Activated CD4-positive, alpha-beta T cell treated with anti-CD3 and anti-CD28 coated beads for 36 hours (primary cell): ENCODE measurements at regions of chr22 and their contacts with region 1.

Region 1: DNA sequence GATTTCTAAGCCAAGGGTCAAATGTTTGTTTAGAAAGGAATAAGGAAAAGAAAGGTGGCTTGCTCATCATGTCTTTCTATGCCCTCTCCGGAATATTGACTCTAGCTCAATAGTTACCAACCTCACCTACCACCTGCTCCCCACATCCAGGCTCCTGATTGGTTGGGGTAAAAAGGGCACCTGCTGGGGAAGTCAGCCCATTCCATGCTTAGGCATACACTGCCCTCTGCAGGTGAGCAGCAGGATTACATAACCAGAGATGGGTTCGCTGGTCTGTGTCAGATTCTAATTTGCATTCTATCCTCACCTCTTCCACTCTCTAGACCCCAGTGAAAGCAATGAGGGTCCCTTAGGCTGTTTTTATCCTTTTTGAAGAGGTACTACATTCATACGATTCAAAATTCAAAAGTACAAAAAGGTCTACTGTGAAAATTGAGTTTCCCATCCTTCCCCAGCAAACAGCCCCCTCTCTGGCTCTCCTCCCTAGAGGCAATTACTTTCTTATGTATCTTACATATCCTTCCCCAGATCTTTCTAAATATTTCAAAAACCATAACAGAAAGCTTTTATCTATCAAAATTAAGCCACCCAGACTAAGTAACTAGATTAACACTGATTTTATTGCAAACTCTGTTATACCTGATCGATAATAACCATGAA is 98.0 kb upstream of the ASPHD2 start:
- DNase-seq: peak; percentile 76
- ATAC-seq: peak; percentile 55
- H3K4me3 Mint-ChIP-seq: no peak overlapping the region
- H3K27ac Mint-ChIP-seq: no peak overlapping the region
- H3K4me1 Mint-ChIP-seq: no peaks in the 10 kb centered on the region
- H3K27me3 Mint-ChIP-seq: peaks cover 9% of the 10 kb centered on the region

Region 2: GRCh38 chr22:25465949-25466348 is 865.1 kb before region 1 on chr22:
- CTCF ChIA-PET with region 1: interaction called, 6 read pairs
- POLR2A ChIA-PET with region 1: no interaction called
- intact Hi-C with region 1: loop called in 1 of 2 experiments (anchors 2 kb)
- DNase-seq: no peak
- ATAC-seq: no peak
- H3K4me3 Mint-ChIP-seq: no peak overlapping the region
- H3K27ac Mint-ChIP-seq: no peak overlapping the region
- H3K4me1 Mint-ChIP-seq: no peaks in the 10 kb centered on the region
- H3K27me3 Mint-ChIP-seq: no peaks in the 10 kb centered on the region

Region 3: GRCh38 chr22:25777870-25778269 is 553.2 kb before region 1 on chr22:
- CTCF ChIA-PET with region 1: no interaction called
- POLR2A ChIA-PET with region 1: no interaction called
- intact Hi-C with region 1: loop called (anchors 1 to 2 kb)
- DNase-seq: peak; percentile 16
- ATAC-seq: no peak
- H3K4me3 Mint-ChIP-seq: no peak overlapping the region
- H3K27ac Mint-ChIP-seq: no peak overlapping the region
- H3K4me1 Mint-ChIP-seq: peaks cover under 1% of the 10 kb centered on the region
- H3K27me3 Mint-ChIP-seq: peaks cover 2% of the 10 kb centered on the region

Region 4: GRCh38 chr22:25896098-25896497 is 435.0 kb before region 1 on chr22:
- CTCF ChIA-PET with region 1: interaction called, 4 read pairs
- POLR2A ChIA-PET with region 1: no interaction called
- intact Hi-C with region 1: loop called in 1 of 2 experiments (anchors 2 kb)
- DNase-seq: no peak
- ATAC-seq: no peak
- H3K4me3 Mint-ChIP-seq: no peak overlapping the region
- H3K27ac Mint-ChIP-seq: no peak overlapping the region
- H3K4me1 Mint-ChIP-seq: no peaks in the 10 kb centered on the region
- H3K27me3 Mint-ChIP-seq: peaks cover 3% of the 10 kb centered on the region

Region 5: GRCh38 chr22:26172389-26172990 is 158.6 kb before region 1 on chr22:
- CTCF ChIA-PET with region 1: interaction called, 8 read pairs
- POLR2A ChIA-PET with region 1: no interaction called
- intact Hi-C with region 1: loop called (anchors 2 to 5 kb)
- DNase-seq: peak; percentile 60
- ATAC-seq: no peak
- H3K4me3 Mint-ChIP-seq: no peak overlapping the region
- H3K27ac Mint-ChIP-seq: no peak overlapping the region
- H3K4me1 Mint-ChIP-seq: no peaks in the 10 kb centered on the region
- H3K27me3 Mint-ChIP-seq: peaks cover 47% of the 10 kb centered on the region